ENCODE measurements at regions of chr1 and their contacts with region 1.

Region 1: GRCh38 chr1:160460683-160461287 is 60.4 kb downstream of the VANGL2 start:
- DNase-seq: no peak
- H3K4me3 Mint-ChIP-seq: peak overlapping the region; percentile 76
- H3K27ac Mint-ChIP-seq: peak overlapping the region; percentile 98
- H3K4me1 Mint-ChIP-seq: peaks cover 65% of the 10 kb centered on the region
- H3K27me3 Mint-ChIP-seq: no peaks in the 10 kb centered on the region

Region 2: DNA sequence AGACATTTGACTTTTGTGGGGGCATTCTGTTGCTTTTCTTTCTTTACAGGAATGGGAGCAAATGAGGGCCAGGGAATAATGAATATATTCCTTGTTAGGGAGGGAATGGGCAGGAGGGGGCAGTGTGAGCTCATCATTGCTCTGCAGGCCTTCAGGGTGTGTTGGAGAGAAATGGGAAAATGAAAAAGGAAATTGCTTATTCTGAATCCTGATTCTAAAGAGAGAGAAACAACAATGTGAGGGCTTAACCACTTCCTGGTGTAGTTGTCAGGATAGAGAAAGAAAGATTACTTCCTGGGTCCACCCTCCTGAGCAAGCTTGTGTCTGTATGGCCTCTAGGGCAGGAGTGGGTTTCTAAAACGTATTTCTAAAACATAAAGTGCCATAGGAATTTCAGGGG is 32.1 kb before region 1 on chr1:
- intact Hi-C with region 1: loop called (anchors 2 kb)
- DNase-seq: no peak
- H3K4me3 Mint-ChIP-seq: no peak overlapping the region
- H3K27ac Mint-ChIP-seq: peak overlapping the region; percentile 73
- H3K4me1 Mint-ChIP-seq: peaks cover 46% of the 10 kb centered on the region
- H3K27me3 Mint-ChIP-seq: no peaks in the 10 kb centered on the region